ENCODE measurements at regions of chr2 and their contacts with region 1.

Region 1: DNA sequence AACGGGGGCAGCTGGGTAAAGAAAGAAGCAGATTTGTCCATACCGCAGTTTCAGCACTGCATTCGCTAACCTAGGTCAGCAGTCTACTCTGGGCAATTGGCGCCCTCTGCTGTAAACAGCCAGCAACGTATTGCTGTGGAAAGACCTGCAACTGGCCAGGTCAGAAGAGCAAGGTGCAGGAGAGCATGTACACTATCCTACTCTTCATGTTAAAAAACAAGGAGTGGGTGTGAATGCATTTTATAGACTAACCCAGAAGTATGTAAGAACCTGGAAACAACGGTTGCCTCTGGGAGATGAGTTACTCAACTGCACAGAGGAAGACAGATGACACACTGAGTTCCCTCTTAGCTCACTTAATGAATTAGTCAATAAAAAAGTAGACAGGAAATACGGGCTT is 6.2 kb downstream of the MRPS5 start:
- DNase-seq: peak; percentile 46
- H3K4me3 ChIP-seq: no peak overlapping the region
- H3K27ac ChIP-seq: no peak overlapping the region
- H3K4me1 ChIP-seq: peaks cover 35% of the 10 kb centered on the region
- H3K27me3 ChIP-seq: no peaks in the 10 kb centered on the region
- CTCF ChIP-seq: peak; percentile 78

Region 2: DNA sequence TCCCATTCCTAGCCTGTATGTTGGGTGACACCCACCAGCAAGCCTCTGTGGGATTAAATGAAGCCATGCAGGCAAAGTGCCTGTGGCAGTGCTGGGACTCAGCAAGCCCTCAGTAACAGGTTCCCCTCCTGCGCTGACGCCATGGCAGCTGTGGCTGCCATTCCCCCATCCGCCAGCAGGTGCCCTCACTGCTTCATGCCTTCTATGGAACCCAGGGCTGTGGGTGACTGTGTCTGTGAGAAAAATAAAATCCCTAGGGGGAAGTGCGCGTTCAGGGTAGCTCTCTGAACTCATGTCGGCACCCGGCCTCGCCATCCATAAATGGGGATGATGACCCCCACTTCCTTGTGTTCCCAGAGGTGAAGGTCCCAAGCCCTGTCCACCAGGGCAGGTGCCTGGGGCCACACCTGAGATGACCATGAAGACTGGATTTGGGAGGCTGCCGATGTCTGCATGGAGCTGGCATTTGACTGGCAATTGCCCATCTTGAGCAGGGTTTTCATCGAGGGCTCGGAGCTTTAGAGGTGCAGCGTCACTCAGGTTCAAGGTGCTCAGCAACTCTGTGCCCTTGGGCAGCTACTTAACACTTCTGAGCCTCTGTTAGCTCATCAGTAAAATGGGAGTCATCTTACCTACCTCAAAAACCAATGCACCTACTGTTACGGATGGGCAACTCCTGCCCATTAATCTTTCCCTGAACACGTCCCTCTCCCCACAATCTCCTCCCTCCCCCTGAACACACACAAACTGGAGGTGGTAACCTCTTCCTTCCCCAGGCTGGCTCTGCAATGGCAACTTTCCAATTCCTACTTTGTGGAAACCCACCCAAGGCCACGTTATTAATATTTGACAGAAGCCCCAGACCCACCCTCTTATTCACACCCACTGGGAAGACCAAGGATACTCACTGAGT is 92.9 kb before region 1 on chr2:
- intact Hi-C with region 1: loop called (anchors 10 kb)
- DNase-seq: peak; percentile 57
- H3K4me3 ChIP-seq: no peak overlapping the region
- H3K27ac ChIP-seq: no peak overlapping the region
- H3K4me1 ChIP-seq: peaks cover 26% of the 10 kb centered on the region
- H3K27me3 ChIP-seq: peaks cover 84% of the 10 kb centered on the region
- CTCF ChIP-seq: peak; percentile 92

Region 3: DNA sequence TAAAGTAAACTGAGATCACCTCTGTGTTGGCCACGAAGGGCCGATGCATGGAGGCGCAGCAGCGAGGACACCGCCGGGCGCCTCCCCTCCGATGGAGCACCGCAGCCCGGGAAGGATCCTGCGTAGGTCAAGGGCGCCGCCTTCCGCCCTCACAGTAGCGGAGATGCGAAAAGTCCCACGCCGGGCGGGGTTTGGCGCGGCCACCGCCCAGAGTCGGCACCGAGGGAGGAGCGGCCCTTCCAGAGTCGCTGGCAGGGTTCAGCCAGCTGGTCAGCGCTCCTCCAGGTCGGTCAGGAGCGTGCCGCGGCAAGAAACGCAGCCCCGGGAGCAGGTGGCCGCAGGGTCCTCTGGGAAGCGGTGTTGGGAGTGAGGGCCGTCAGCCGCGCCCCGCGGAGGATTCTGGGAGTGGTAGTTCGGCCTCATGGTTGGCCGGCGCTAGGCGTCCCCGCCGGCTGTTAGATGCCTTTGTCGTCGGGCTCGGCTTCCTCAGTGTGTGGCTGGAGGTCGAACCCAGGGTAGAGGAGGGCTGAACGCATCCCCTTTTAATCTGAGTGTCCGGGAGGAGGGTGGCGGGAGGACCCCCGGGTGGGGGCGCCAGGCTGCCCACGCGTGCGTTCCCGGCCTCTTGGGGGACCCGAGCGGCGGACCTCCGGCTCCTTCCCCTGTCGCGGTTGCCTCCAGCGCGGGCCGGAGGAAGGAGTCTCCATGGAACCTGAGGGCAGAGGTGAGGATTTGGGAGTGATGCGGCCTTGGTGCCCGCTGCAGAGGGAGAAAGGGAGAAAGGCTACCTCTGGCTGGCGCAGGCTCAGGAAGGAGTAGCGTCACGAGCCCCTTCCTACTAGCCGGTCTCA is 91.9 kb after region 1 on chr2 and contains the start of gene ZNF892:
- intact Hi-C with region 1: loop called (anchors 5 kb)
- DNase-seq: peak; percentile 93
- H3K4me3 ChIP-seq: peak within 1 kb of the TSS; percentile 90
- H3K27ac ChIP-seq: peak within 1 kb of the TSS; percentile 97
- H3K4me1 ChIP-seq: peaks cover 28% of the 10 kb centered on the region
- H3K27me3 ChIP-seq: no peaks in the 10 kb centered on the region
- CTCF ChIP-seq: peak; percentile 53
- total RNA-seq, gene ZNF892: 4.0 TPM

Measured in left ventricle myocardium inferior (tissue), 1 donor.